ENCODE measurements at regions of chr1 and their contacts with region 1.

Region 1: GRCh38 chr1:108691942-108692723 is at the start of gene PRPF38B:
- DNase-seq: peak; percentile 99
- H3K4me3 ChIP-seq: peak within 1 kb of the TSS; percentile 58 to 86 (median 74)
- H3K27ac ChIP-seq: peak within 1 kb of the TSS; percentile 98 to 100 (median 98)
- H3K4me1 ChIP-seq: peaks cover 23 to 60% (median 48%) of the 10 kb centered on the region in 6 donors
- H3K27me3 ChIP-seq: no peaks in the 10 kb centered on the region
- CTCF ChIP-seq: peak in 1 of 11 experiments; percentile 19
- POLR2A ChIP-seq: peak; percentile 25 to 70 (median 69)
- total RNA-seq, gene PRPF38B: 51.2 to 84.8 (median 66.0) TPM

Region 2: DNA sequence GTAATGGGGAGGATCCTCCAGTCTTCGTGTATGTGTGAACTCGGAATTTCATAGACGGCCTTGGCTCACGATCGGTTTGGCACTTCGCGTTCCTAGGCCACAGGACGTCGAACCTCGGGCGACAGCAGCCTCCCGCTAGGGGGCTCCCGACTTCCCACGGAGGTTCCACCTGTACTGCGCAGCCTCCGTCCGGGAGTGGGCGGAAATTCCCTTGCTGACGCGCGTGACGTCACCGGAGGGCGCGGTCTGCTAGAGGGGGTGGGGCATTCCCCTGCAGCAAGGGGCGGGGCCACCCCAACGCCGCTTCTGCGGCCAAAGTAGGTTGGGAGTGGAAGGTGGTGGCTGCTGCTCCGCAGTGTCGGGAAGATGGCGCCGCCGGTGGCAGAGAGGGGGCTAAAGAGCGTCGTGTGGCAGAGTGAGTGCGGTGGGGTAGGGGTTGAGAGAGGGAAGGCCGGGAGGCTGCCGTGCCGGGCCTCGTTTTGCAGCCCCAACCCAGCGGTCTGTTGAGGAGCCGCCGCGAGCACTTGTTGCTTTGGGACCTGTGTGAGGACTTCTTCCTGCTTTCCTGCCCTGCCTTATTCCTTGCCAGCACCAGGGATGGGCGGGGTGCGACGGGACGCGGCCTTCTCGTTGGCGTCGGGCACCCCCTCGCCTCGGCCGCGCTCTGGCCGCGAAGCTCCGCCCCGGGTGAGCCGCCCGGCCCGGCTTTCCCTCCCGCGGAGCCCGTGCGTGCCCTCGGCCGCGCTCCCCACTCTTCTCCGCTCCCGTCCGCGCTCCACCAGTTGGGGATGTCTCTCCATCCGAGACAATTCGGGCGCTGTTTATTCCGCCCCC is 54.5 kb after region 1 on chr1 and contains the start of gene STXBP3:
- intact Hi-C with region 1: loop called (anchors 10 kb)
- DNase-seq: peak; percentile 100
- H3K4me3 ChIP-seq: peak within 1 kb of the TSS; percentile 57 to 88 (median 76)
- H3K27ac ChIP-seq: peak within 1 kb of the TSS; percentile 94 to 100 (median 97)
- H3K4me1 ChIP-seq: peaks cover 6 to 51% (median 37%) of the 10 kb centered on the region in 6 donors
- H3K27me3 ChIP-seq: no peaks in the 10 kb centered on the region
- CTCF ChIP-seq: peak; percentile 93 to 98 (median 97)
- POLR2A ChIP-seq: peak; percentile 58 to 95 (median 88)
- total RNA-seq, gene STXBP3: 58.6 to 157 (median 73.3) TPM

Region 3: DNA sequence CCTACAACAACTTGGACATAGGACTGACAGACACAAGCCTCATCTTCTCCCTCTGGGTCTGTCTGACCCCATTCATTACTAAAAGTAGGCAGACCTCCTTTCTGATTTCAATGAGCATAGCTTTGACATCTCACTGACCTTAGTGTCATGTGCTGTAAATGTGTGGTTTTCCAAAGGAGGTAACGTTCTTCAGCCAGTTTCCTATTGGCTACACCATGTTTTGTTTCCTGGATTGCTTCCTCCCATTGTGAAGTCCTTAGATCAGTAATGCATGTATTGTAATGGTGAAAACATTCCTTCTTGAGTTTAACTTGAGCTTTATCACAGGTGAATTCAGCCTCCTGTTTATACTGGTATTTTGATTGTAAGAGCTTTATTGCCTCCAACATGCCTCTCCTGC is 75.0 kb after region 1 on chr1:
- intact Hi-C with region 1: no loop called
- DNase-seq: no peak
- H3K4me3 ChIP-seq: no peak overlapping the region
- H3K27ac ChIP-seq: no peak overlapping the region
- H3K4me1 ChIP-seq: peaks cover 0 to 7% (median 0%) of the 10 kb centered on the region in 6 donors
- H3K27me3 ChIP-seq: no peaks in the 10 kb centered on the region
- CTCF ChIP-seq: no peak
- POLR2A ChIP-seq: no peak

Region 4: GRCh38 chr1:109226078-109226445 is 533.9 kb after region 1 on chr1:
- intact Hi-C with region 1: no loop called
- DNase-seq: no peak
- H3K4me3 ChIP-seq: no peak overlapping the region
- H3K27ac ChIP-seq: no peak overlapping the region
- H3K4me1 ChIP-seq: peaks cover 0 to 42% (median 5%) of the 10 kb centered on the region in 6 donors
- H3K27me3 ChIP-seq: no peaks in the 10 kb centered on the region
- CTCF ChIP-seq: no peak
- POLR2A ChIP-seq: no peak